Natural killer cell (primary cell): ENCODE measurements at regions of chr12 and their contacts with region 1.

Region 1: GRCh38 chr12:123075646-123076171 is 75.2 kb downstream of the PITPNM2 start:
- DNase-seq: peak; percentile 73 to 84
- ATAC-seq: peak; percentile 78 to 86 (median 83)
- H3K4me3 ChIP-seq: peak overlapping the region; percentile 58
- H3K4me3 Mint-ChIP-seq: peak overlapping the region; percentile 96
- H3K27ac ChIP-seq: peak overlapping the region; percentile 94
- H3K27ac Mint-ChIP-seq: peak overlapping the region; percentile 97 to 98
- H3K4me1 ChIP-seq: peaks cover 73% of the 10 kb centered on the region
- H3K4me1 Mint-ChIP-seq: peaks cover 67 to 85% of the 10 kb centered on the region in 2 donors
- H3K27me3 ChIP-seq: no peaks in the 10 kb centered on the region
- H3K27me3 Mint-ChIP-seq: no peaks in the 10 kb centered on the region
- CTCF ChIP-seq: peak; percentile 32

Region 2: DNA sequence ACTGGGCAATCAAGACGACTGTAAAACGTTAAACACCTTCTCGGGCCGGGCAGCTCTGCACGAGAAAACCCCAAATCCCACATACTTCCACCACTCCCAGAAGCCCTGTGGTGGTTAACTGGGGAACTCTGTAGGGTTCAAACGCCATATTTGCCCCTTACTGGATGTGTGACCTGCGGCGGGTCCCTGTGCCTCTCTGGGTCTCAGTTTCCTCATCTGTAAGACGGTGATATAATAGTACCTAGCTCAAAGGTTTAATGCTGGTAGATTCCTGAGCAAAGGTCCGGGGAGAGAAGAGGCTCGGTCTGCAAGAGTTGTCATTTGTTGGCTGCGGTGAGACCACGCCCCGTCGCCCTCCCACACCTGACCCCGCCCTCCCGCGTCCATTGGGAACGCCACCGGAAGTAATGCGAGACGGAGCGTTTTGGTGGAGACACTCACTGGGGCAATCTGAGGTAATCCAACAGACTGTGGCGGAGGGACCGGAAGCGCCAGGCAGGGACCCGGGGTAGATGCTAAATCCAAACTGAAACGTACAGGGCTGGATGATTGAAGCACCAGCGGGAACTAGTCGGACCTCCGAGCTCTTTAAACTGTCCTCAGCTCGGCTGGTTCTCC is 101.3 kb before region 1 on chr12:
- intact Hi-C with region 1: loop called (anchors 5 kb)
- DNase-seq: peak; percentile 97 to 99
- ATAC-seq: peak; percentile 82 to 94 (median 86)
- H3K4me3 ChIP-seq: peak overlapping the region; percentile 93
- H3K4me3 Mint-ChIP-seq: peak overlapping the region; percentile 95
- H3K27ac ChIP-seq: peak overlapping the region; percentile 98
- H3K27ac Mint-ChIP-seq: peak overlapping the region; percentile 97
- H3K4me1 ChIP-seq: peaks cover 35% of the 10 kb centered on the region
- H3K4me1 Mint-ChIP-seq: peaks cover 4 to 23% of the 10 kb centered on the region in 2 donors
- H3K27me3 ChIP-seq: no peaks in the 10 kb centered on the region
- H3K27me3 Mint-ChIP-seq: no peaks in the 10 kb centered on the region
- CTCF ChIP-seq: no peak

Region 3: DNA sequence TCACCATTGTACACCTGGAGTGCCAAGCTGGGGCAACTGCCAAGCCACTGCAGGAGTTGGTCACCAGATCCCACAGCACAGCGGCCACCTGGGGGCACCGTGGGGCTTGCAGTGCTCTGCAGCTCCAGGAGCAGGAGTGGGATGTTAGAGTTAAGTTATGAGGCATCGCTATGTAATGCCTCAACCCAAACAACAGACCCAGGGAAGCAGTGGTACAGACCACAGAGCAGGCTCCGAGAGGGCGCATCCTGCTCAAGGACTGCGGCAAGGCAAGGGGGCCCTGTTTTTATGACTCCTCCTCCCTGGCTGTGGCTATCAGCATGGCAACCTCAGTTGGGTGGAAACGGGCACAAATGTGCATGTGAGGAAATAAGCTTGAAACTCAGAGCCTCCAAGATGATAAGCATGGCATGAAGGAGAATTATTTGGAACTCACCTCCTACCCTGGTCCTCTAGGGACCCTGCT is 32.1 kb before region 1 on chr12:
- intact Hi-C with region 1: loop called (anchors 1 kb)
- DNase-seq: peak; percentile 55 to 77
- ATAC-seq: peak; percentile 84 to 91 (median 87)
- H3K4me3 ChIP-seq: no peak overlapping the region
- H3K4me3 Mint-ChIP-seq: peak overlapping the region; percentile 42
- H3K27ac ChIP-seq: peak overlapping the region; percentile 28
- H3K27ac Mint-ChIP-seq: peak overlapping the region; percentile 47 to 70
- H3K4me1 ChIP-seq: peaks cover 23% of the 10 kb centered on the region
- H3K4me1 Mint-ChIP-seq: peaks cover 43 to 45% of the 10 kb centered on the region in 2 donors
- H3K27me3 ChIP-seq: no peaks in the 10 kb centered on the region
- H3K27me3 Mint-ChIP-seq: no peaks in the 10 kb centered on the region
- CTCF ChIP-seq: peak; percentile 53

Region 4: DNA sequence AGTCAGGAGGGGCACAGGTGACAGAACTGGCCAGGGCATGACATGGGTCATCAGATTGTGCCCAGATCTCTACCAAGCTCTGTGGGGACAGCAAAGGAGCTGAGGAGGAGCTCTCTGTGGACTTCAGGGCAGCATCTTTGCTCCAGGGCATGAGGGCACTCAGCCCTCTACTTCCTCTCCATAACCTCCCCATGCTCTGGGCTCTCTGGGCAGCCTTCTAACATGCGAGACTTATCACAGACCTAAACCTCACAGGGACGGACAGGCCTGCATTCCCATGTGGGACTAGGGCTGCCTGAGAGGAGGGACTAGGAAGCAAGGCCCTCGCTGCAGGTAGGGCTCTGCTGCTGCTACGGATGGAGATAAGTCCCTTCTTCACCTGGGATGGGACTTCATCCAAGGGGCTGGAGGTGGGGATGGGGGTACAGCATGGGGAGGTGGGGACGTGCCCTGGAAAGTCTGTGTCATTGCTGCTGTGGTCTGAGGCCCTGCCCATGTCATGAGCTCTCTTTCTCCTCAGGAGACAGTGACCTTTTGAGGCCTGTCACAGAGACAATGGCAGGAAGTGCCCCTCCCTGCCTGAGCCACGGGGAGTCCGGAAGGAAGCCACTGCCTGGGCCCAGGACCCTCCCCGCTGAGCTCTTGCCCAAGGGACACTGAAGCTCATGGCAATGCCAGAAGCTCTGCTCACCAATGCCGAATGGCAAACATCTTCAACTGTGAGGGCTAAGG is 31.1 kb after region 1 on chr12:
- intact Hi-C with region 1: loop called (anchors 2 kb)
- DNase-seq: peak; percentile 41 to 65
- ATAC-seq: peak; percentile 62 to 76 (median 76)
- H3K4me3 ChIP-seq: no peak overlapping the region
- H3K4me3 Mint-ChIP-seq: peak overlapping the region; percentile 72
- H3K27ac ChIP-seq: peak overlapping the region; percentile 73
- H3K27ac Mint-ChIP-seq: peak overlapping the region; percentile 82 to 90
- H3K4me1 ChIP-seq: peaks cover 59% of the 10 kb centered on the region
- H3K4me1 Mint-ChIP-seq: peaks cover 65 to 67% of the 10 kb centered on the region in 2 donors
- H3K27me3 ChIP-seq: no peaks in the 10 kb centered on the region
- H3K27me3 Mint-ChIP-seq: no peaks in the 10 kb centered on the region
- CTCF ChIP-seq: no peak

Region 5: GRCh38 chr12:123150744-123151456 is 75.2 kb after region 1 on chr12 and contains the start of gene PITPNM2:
- intact Hi-C with region 1: no loop called
- DNase-seq: peak; percentile 58 to 77
- ATAC-seq: peak; percentile 89 to 90 (median 90)
- H3K4me3 ChIP-seq: peak within 1 kb of the TSS; percentile 40
- H3K4me3 Mint-ChIP-seq: peak within 1 kb of the TSS; percentile 86
- H3K27ac ChIP-seq: no peak within 1 kb of the TSS
- H3K27ac Mint-ChIP-seq: peak within 1 kb of the TSS; percentile 65 to 71
- H3K4me1 ChIP-seq: peaks cover 29% of the 10 kb centered on the region
- H3K4me1 Mint-ChIP-seq: peaks cover 36 to 39% of the 10 kb centered on the region in 2 donors
- H3K27me3 ChIP-seq: no peaks in the 10 kb centered on the region
- H3K27me3 Mint-ChIP-seq: no peaks in the 10 kb centered on the region
- CTCF ChIP-seq: no peak
- total RNA-seq, gene PITPNM2: 38.9 to 94.6 (median 42.5) TPM

Region 6: DNA sequence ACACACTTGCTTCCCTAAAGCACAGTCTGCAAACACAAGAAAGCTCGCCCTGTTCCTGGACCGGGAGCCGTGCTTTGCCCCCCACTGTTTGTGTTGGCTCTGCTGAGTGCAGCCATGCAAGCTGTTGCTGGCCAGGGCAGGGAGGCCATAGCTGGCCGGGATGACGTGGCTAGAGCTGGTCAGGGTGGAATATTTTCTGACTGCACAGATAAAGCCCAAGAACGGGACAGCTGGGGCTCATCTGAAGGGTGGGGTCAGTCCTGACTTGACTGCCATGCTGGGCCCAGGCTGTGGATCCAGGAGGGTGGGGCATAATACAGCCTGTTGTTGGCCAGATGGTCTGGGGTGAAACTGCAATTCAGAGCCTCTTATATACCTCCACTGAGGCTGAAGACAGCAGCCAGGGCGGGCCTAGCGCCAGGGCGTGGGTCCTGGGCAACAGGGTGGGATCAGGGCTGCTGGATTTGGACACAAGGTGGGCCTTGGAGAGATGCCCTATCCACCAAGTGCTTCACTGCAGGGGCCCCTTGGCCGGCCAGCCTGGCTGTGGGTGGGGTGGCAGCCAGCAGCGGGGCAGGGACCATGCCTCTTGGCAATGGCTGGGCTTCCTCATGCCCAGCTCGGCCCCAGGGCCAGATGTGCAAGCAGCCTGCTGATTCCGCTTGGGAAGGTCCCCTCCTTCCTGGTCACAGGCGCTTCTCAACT is 323.0 kb after region 1 on chr12:
- intact Hi-C with region 1: no loop called
- DNase-seq: no peak
- ATAC-seq: no peak
- H3K4me3 ChIP-seq: no peak overlapping the region
- H3K4me3 Mint-ChIP-seq: no peak overlapping the region
- H3K27ac ChIP-seq: no peak overlapping the region
- H3K27ac Mint-ChIP-seq: no peak overlapping the region
- H3K4me1 ChIP-seq: no peaks in the 10 kb centered on the region
- H3K4me1 Mint-ChIP-seq: peaks cover 7 to 11% of the 10 kb centered on the region in 2 donors
- H3K27me3 ChIP-seq: no peaks in the 10 kb centered on the region
- H3K27me3 Mint-ChIP-seq: no peaks in the 10 kb centered on the region
- CTCF ChIP-seq: no peak